OCI-LY7 (cell line): ENCODE measurements at regions of chr5 and their contacts with region 1.

Region 1: GRCh38 chr5:59637878-59638580 is 255.5 kb downstream of the PDE4D start:
- DNase-seq: no peak
- H3K4me3 ChIP-seq: no peak overlapping the region
- H3K27ac ChIP-seq: no peak overlapping the region
- H3K4me1 ChIP-seq: no peaks in the 10 kb centered on the region
- CTCF ChIP-seq: no peak

Region 2: DNA sequence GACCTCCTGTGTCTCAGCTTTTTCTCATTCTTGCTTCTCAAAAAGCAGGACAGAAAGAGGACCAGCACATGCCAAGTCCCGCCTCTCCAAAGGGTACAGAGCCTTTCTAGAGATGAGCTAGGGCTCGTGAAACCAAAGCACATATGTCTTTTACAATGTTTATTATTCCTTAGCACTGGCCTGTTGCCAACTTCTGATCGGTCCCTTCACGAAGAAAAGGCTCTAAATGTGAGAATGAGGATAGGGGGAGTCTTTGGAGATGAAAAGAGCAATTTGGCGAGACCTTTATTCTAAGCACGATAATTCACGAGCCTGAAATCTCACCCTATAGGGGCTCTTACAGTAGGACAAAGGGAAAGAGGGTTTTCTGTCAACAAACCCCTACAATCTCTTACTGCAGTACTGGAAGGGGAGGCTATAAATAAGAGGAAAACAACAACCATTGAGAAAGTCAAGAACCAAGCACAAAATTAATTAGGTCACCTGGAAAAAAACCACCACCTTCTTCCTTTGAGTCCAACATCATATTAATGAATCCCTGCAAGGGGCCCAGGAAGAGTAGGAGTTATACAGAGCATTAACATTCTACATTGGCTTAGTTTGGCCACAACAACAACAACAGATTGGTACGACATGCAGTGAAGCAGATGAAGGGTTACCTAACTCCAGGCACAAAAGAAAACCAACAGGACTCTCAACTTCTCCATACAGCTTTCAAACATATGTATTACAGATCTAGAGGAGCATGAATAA is 54.0 kb before region 1 on chr5:
- CTCF ChIA-PET with region 1: no interaction called
- POLR2A ChIA-PET with region 1: no interaction called
- intact Hi-C with region 1: loop called (anchors 5 kb)
- DNase-seq: no peak
- H3K4me3 ChIP-seq: no peak overlapping the region
- H3K27ac ChIP-seq: no peak overlapping the region
- H3K4me1 ChIP-seq: no peaks in the 10 kb centered on the region
- CTCF ChIP-seq: no peak

Region 3: GRCh38 chr5:59648949-59649921 is 11.2 kb after region 1 on chr5:
- CTCF ChIA-PET with region 1: no interaction called
- POLR2A ChIA-PET with region 1: no interaction called
- intact Hi-C with region 1: no loop called
- DNase-seq: no peak
- H3K4me3 ChIP-seq: no peak overlapping the region
- H3K27ac ChIP-seq: no peak overlapping the region
- H3K4me1 ChIP-seq: no peaks in the 10 kb centered on the region
- CTCF ChIP-seq: no peak